ENCODE measurements at regions of chr11 and their contacts with region 1.

Region 1: DNA sequence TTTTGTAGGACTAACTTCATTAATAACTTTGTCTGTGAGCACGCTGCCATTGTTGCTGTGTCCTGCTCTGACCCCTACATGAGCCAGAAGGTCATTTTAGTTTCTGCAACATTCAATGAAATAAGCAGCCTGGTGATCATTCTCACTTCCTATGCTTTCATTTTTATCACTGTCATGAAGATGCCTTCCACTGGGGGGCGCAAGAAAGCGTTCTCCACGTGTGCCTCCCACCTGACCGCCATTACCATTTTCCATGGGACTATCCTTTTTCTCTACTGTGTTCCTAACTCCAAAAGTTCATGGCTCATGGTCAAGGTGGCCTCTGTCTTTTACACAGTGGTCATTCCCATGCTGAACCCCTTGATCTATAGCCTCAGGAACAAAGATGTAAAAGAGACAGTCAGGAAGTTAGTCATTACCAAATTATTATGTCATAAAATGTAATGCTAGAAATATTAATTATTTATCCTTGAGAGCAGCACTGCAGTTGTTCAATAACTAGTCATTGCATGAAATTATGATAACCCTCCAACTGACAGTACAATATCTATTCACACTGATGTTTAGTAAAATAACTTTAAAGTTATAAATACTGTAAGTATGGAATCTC is 46.4 kb upstream of the OR5D13 start:
- H3K4me3 Mint-ChIP-seq: no peak overlapping the region
- H3K27ac Mint-ChIP-seq: no peak overlapping the region
- H3K4me1 Mint-ChIP-seq: no peaks in the 10 kb centered on the region
- H3K27me3 Mint-ChIP-seq: no peaks in the 10 kb centered on the region

Region 2: DNA sequence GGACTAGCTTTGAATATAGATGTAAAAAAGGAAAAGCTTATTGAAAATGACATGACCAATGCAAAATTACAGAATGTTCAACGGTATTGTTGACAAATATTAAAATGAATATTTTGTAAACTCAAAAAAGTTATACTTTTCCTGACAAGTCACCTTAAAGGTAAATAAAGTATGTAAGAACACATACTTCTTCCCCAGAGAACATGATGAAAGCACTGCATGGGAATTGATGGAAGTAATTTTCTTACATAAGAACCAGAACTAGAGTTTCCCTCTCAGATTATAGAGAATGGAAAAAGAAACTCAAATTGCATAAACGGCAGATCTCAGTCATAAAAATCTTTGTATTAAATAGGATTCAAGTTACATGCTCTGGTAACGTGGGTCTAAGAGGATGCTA is 92.0 kb before region 1 on chr11 and contains the start of gene OR4P4:
- intact Hi-C with region 1: no loop called
- H3K4me3 Mint-ChIP-seq: no peak within 1 kb of the TSS
- H3K27ac Mint-ChIP-seq: no peak within 1 kb of the TSS
- H3K4me1 Mint-ChIP-seq: no peaks in the 10 kb centered on the region
- H3K27me3 Mint-ChIP-seq: no peaks in the 10 kb centered on the region

Region 3: GRCh38 chr11:55707029-55707428 is 19.8 kb before region 1 on chr11:
- intact Hi-C with region 1: loop called (anchors 2 kb)
- H3K4me3 Mint-ChIP-seq: no peak overlapping the region
- H3K27ac Mint-ChIP-seq: no peak overlapping the region
- H3K4me1 Mint-ChIP-seq: no peaks in the 10 kb centered on the region
- H3K27me3 Mint-ChIP-seq: no peaks in the 10 kb centered on the region

Region 4: GRCh38 chr11:55773138-55773537 is 46.3 kb after region 1 on chr11 and contains the start of gene OR5D13:
- intact Hi-C with region 1: no loop called
- H3K4me3 Mint-ChIP-seq: no peak within 1 kb of the TSS
- H3K27ac Mint-ChIP-seq: no peak within 1 kb of the TSS
- H3K4me1 Mint-ChIP-seq: no peaks in the 10 kb centered on the region
- H3K27me3 Mint-ChIP-seq: no peaks in the 10 kb centered on the region